ENCODE measurements at regions of chr15 and their contacts with region 1.

Region 1: GRCh38 chr15:32844118-32844711 is 126.4 kb downstream of the GREM1 start:
- DNase-seq: no peak
- ATAC-seq: peak; percentile 74; the same call in 2 of the 3 replicates
- H3K4me3 ChIP-seq: no peak overlapping the region
- H3K27ac ChIP-seq: no peak overlapping the region
- H3K4me1 ChIP-seq: no peaks in the 10 kb centered on the region
- H3K27me3 ChIP-seq: 0 out of 4 replicates have a peak, but pooled peaks cover 2% of the 10 kb centered on the region in 2 experiments
- CTCF ChIP-seq: peak; percentile 58 to 65 (median 65); a peak in 5 of 6 replicates
- EP300 ChIP-seq: no peak
- POLR2A ChIP-seq: no peak
- RAD21 ChIP-seq: peak; percentile 63

Region 2: GRCh38 chr15:32657198-32657883 is 186.9 kb before region 1 on chr15:
- CTCF ChIA-PET with region 1: interaction called, 46 read pairs
- POLR2A ChIA-PET with region 1: no interaction called
- RAD21 ChIA-PET with region 1: interaction called, 10 read pairs
- SMC1A ChIA-PET with region 1: interaction called, 14 read pairs
- in situ Hi-C with region 1: no loop called
- intact Hi-C with region 1: no loop called
- DNase-seq: no peak
- ATAC-seq: peak; percentile 41; the same call in 2 of the 3 replicates
- H3K4me3 ChIP-seq: no peak overlapping the region
- H3K27ac ChIP-seq: no peak overlapping the region
- H3K4me1 ChIP-seq: no peaks in the 10 kb centered on the region
- H3K27me3 ChIP-seq: no peaks in the 10 kb centered on the region
- CTCF ChIP-seq: peak in 2 of 3 experiments; percentile 18 to 20; a peak in 2 of 6 replicates
- EP300 ChIP-seq: no peak
- POLR2A ChIP-seq: no peak
- RAD21 ChIP-seq: 0 out of 2 replicates have a peak, but pooled peaks have one; percentile 18

Region 3: GRCh38 chr15:32803631-32804030 is 40.6 kb before region 1 on chr15:
- CTCF ChIA-PET with region 1: no interaction called
- POLR2A ChIA-PET with region 1: no interaction called
- RAD21 ChIA-PET with region 1: no interaction called
- SMC1A ChIA-PET with region 1: no interaction called
- in situ Hi-C with region 1: no loop called
- intact Hi-C with region 1: no loop called
- DNase-seq: no peak
- ATAC-seq: no peak
- H3K4me3 ChIP-seq: no peak overlapping the region
- H3K27ac ChIP-seq: no peak overlapping the region
- H3K4me1 ChIP-seq: no peaks in the 10 kb centered on the region
- H3K27me3 ChIP-seq: no peaks in the 10 kb centered on the region
- CTCF ChIP-seq: no peak
- EP300 ChIP-seq: no peak
- POLR2A ChIP-seq: no peak
- RAD21 ChIP-seq: no peak

Region 4: DNA sequence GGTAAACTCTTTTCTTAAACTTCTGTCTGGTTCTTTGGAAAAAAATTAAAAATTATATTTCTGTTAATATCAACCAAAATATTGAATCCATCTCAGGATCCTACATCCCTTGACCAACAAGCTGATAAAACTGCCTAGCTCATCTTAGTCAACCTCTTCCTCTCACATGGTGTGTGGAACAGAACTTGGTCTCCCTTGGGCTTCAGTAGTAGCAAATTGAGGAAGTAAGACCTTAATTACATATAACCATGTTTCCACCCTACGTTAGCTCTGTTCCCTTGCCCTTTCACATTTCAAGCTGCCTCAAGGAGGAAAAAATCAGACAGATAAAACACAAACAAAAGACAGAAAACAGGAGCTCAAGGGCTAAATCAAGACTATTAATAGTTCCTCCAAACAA is 10.1 kb before region 1 on chr15:
- CTCF ChIA-PET with region 1: interaction called, 40 read pairs
- POLR2A ChIA-PET with region 1: interaction called, 4 read pairs
- RAD21 ChIA-PET with region 1: interaction called, 11 read pairs
- SMC1A ChIA-PET with region 1: interaction called, 43 read pairs
- in situ Hi-C with region 1: no loop called
- intact Hi-C with region 1: no loop called
- DNase-seq: peak; percentile 39
- ATAC-seq: peak; percentile 94
- H3K4me3 ChIP-seq: no peak overlapping the region
- H3K27ac ChIP-seq: no peak overlapping the region
- H3K4me1 ChIP-seq: peaks cover 6% of the 10 kb centered on the region; the same call in 1 of the 2 replicates
- H3K27me3 ChIP-seq: peaks cover 1 to 2% of the 10 kb centered on the region in 2 experiments; a peak in 1 of 4 replicates
- CTCF ChIP-seq: no peak
- EP300 ChIP-seq: no peak
- POLR2A ChIP-seq: no peak
- RAD21 ChIP-seq: no peak

Region 5: GRCh38 chr15:32861761-32862160 is 17.5 kb after region 1 on chr15:
- CTCF ChIA-PET with region 1: interaction called, 19 read pairs
- POLR2A ChIA-PET with region 1: no interaction called
- RAD21 ChIA-PET with region 1: no interaction called
- SMC1A ChIA-PET with region 1: interaction called, 8 read pairs
- in situ Hi-C with region 1: no loop called
- intact Hi-C with region 1: no loop called
- DNase-seq: no peak
- ATAC-seq: peak; percentile 61
- H3K4me3 ChIP-seq: no peak overlapping the region
- H3K27ac ChIP-seq: no peak overlapping the region
- H3K4me1 ChIP-seq: peaks cover 8% of the 10 kb centered on the region
- H3K27me3 ChIP-seq: no peaks in the 10 kb centered on the region; a peak in 1 of 4 replicates
- CTCF ChIP-seq: no peak
- EP300 ChIP-seq: no peak
- POLR2A ChIP-seq: no peak
- RAD21 ChIP-seq: no peak

Region 6: GRCh38 chr15:32888221-32888761 is 44.1 kb after region 1 on chr15:
- CTCF ChIA-PET with region 1: interaction called, 10 read pairs
- POLR2A ChIA-PET with region 1: no interaction called
- RAD21 ChIA-PET with region 1: no interaction called
- SMC1A ChIA-PET with region 1: interaction called, 4 read pairs
- in situ Hi-C with region 1: no loop called
- intact Hi-C with region 1: no loop called
- DNase-seq: no peak
- ATAC-seq: no peak
- H3K4me3 ChIP-seq: no peak overlapping the region
- H3K27ac ChIP-seq: no peak overlapping the region
- H3K4me1 ChIP-seq: no peaks in the 10 kb centered on the region
- H3K27me3 ChIP-seq: no peaks in the 10 kb centered on the region
- CTCF ChIP-seq: no peak
- EP300 ChIP-seq: no peak
- POLR2A ChIP-seq: no peak
- RAD21 ChIP-seq: no peak

Region 7: GRCh38 chr15:32936283-32936918 is 92.2 kb after region 1 on chr15:
- CTCF ChIA-PET with region 1: interaction called, 111 read pairs
- POLR2A ChIA-PET with region 1: interaction called, 3 read pairs
- RAD21 ChIA-PET with region 1: interaction called, 40 read pairs
- SMC1A ChIA-PET with region 1: interaction called, 49 read pairs
- in situ Hi-C with region 1: no loop called
- intact Hi-C with region 1: no loop called
- DNase-seq: no peak
- ATAC-seq: peak; percentile 56; the same call in 2 of the 3 replicates
- H3K4me3 ChIP-seq: no peak overlapping the region
- H3K27ac ChIP-seq: no peak overlapping the region
- H3K4me1 ChIP-seq: no peaks in the 10 kb centered on the region
- H3K27me3 ChIP-seq: peaks cover 0 to 2% of the 10 kb centered on the region in 2 experiments; a peak in 1 of 4 replicates
- CTCF ChIP-seq: peak; percentile 53 to 67 (median 66); a peak in 5 of 6 replicates
- EP300 ChIP-seq: no peak
- POLR2A ChIP-seq: no peak
- RAD21 ChIP-seq: peak; percentile 53

Region 8: DNA sequence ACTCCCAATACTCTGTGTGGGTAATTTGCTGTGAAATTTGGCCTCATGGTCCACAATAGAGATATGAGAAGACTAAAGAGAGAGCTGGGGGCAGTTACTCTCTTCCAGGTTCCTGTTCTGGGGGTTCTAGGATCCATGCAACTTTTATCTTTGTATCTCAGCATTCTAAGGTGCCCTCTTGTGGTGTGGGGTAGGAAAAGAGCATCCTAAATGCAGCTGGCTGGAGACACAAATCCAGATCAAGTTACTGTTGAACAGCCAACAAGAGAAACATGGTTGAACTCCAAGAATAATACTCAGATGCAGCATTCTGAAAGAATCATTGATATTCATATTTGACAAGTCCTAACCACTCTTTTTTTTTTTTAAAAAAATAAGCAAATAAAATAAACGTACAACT is 111.8 kb after region 1 on chr15:
- CTCF ChIA-PET with region 1: interaction called, 119 read pairs
- POLR2A ChIA-PET with region 1: interaction called, 3 read pairs
- RAD21 ChIA-PET with region 1: interaction called, 25 read pairs
- SMC1A ChIA-PET with region 1: interaction called, 44 read pairs
- in situ Hi-C with region 1: no loop called
- intact Hi-C with region 1: loop called (anchors 2 kb)
- DNase-seq: no peak
- ATAC-seq: peak; percentile 62; the same call in 2 of the 3 replicates
- H3K4me3 ChIP-seq: no peak overlapping the region
- H3K27ac ChIP-seq: no peak overlapping the region
- H3K4me1 ChIP-seq: no peaks in the 10 kb centered on the region
- H3K27me3 ChIP-seq: no peaks in the 10 kb centered on the region
- CTCF ChIP-seq: peak; percentile 49 to 62 (median 58); a peak in 5 of 6 replicates
- EP300 ChIP-seq: no peak
- POLR2A ChIP-seq: no peak
- RAD21 ChIP-seq: peak; percentile 65